PC-9 (cell line): ENCODE measurements at regions of chr1 and their contacts with region 1.

Region 1: GRCh38 chr1:55244476-55245099 is 29.4 kb upstream of the USP24 start:
- DNase-seq: peak; percentile 39 to 86
- H3K4me3 ChIP-seq: peak overlapping the region; percentile 23; the same call in 1 of the 2 replicates
- H3K27ac ChIP-seq: peak overlapping the region; percentile 96
- H3K4me1 ChIP-seq: peaks cover 57% of the 10 kb centered on the region
- H3K27me3 ChIP-seq: no peaks in the 10 kb centered on the region
- CTCF ChIP-seq: no peak

Region 2: GRCh38 chr1:54861070-54861761 is 383.4 kb before region 1 on chr1:
- CTCF ChIA-PET with region 1: no interaction called
- POLR2A ChIA-PET with region 1: no interaction called
- intact Hi-C with region 1: no loop called
- DNase-seq: peak; percentile 79 to 89
- H3K4me3 ChIP-seq: no peak overlapping the region
- H3K27ac ChIP-seq: peak overlapping the region; percentile 88
- H3K4me1 ChIP-seq: peaks cover 90% of the 10 kb centered on the region
- H3K27me3 ChIP-seq: no peaks in the 10 kb centered on the region
- CTCF ChIP-seq: no peak

Region 3: DNA sequence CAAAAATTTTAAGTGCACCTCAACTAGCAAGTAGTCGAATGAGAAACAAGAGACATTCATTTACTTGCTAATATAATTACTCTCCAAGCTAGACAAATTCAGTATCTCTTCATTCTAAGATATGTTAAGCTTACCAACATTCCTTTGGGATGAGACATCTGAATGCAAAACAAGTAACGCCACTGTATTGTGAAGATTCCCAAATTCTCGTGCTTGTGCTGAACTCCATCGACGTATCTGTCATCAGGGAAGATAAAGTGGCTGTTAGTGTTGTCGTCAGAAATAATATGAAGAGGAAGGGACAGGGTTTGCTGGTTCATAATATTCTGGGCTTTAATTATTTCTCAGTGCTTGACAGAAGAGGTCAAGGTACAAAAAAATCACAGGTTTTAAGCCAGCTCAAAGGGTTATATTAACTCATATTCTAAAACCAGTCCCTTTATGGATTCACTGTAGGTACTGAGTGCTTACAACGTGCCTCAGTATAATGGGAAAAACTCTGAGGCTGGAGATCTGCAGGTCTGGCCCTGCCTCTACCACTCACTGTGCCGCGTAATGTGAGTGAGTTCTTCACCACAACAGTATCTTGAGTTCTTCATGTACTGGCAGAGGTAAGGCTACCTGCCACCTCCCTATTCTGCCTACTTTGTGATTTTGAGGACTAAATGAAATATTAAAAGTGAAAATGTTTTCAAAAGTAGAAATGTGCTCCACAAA is 163.2 kb before region 1 on chr1:
- CTCF ChIA-PET with region 1: no interaction called
- POLR2A ChIA-PET with region 1: interaction called, 13 read pairs
- intact Hi-C with region 1: no loop called
- DNase-seq: peak in 1 of 2 experiments; percentile 40
- H3K4me3 ChIP-seq: no peak overlapping the region
- H3K27ac ChIP-seq: no peak overlapping the region
- H3K4me1 ChIP-seq: no peaks in the 10 kb centered on the region
- H3K27me3 ChIP-seq: no peaks in the 10 kb centered on the region
- CTCF ChIP-seq: no peak

Region 4: DNA sequence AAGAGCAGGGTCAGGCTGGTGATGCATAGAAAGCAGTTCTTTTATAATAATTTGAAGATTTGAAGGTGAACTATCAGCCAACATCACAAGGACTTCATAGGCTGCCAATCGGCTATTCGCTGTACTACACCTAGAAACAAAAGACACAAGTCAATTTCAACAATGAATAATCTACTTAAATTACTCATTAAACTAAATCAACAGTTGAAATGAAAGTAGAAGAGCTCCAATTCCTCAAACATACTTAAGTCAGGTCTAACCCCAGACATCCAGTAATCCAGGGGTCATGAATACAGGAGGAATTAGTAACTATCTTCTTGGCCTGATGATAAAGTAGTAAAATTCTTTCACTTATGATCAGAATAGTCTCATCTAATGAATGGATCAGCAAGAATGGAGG is 140.7 kb before region 1 on chr1:
- CTCF ChIA-PET with region 1: no interaction called
- POLR2A ChIA-PET with region 1: no interaction called
- intact Hi-C with region 1: no loop called
- DNase-seq: no peak
- H3K4me3 ChIP-seq: no peak overlapping the region
- H3K27ac ChIP-seq: no peak overlapping the region
- H3K4me1 ChIP-seq: no peaks in the 10 kb centered on the region
- H3K27me3 ChIP-seq: no peaks in the 10 kb centered on the region
- CTCF ChIP-seq: no peak

Region 5: DNA sequence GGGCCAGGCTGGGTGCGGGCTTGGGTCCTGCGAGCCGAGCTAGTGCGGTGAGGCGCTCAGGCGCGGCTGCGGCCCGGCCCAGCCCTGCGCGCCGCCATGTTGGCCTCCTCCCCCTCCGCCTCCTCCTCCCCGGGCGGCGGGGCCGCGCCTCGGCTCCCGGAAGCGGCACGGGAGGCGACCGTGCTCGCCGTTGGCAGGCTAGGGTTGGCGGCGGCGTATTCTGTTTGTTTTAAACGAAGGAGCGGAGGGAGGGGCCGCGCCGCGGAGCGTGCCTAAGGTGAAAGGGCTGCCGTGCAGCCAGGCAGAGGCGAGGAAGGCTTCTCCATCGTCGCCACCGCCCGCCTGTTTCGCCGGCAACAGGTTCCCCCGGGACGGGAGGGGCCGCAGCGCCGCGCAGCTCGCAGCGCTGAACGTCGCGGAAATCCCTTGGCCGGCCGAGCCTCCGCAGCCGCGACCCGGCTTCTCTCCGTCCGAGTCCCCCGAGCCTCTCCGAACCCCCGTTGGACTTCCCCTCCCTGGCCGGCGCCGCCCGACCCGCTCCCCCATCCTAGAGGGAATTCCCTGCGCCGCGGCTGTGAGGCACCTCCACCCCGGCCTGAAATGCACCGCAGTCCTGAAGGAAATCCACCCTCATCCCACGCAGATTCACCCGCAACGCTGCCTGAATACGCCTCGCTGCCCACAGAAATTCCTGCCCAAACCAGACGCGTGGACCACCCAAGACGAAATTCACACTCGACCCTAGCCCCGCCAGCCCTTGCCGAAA is 29.1 kb before region 1 on chr1 and contains the start of gene USP24:
- CTCF ChIA-PET with region 1: no interaction called
- POLR2A ChIA-PET with region 1: interaction called, 5 read pairs
- intact Hi-C with region 1: loop called (anchors 2 kb)
- DNase-seq: peak; percentile 71 to 87
- H3K4me3 ChIP-seq: peak within 1 kb of the TSS; percentile 92
- H3K27ac ChIP-seq: peak within 1 kb of the TSS; percentile 87
- H3K4me1 ChIP-seq: peaks cover 58% of the 10 kb centered on the region
- H3K27me3 ChIP-seq: no peaks in the 10 kb centered on the region
- CTCF ChIP-seq: no peak
- total RNA-seq, gene USP24: 56.3 and 61.0 TPM in 2 replicates

Region 6: DNA sequence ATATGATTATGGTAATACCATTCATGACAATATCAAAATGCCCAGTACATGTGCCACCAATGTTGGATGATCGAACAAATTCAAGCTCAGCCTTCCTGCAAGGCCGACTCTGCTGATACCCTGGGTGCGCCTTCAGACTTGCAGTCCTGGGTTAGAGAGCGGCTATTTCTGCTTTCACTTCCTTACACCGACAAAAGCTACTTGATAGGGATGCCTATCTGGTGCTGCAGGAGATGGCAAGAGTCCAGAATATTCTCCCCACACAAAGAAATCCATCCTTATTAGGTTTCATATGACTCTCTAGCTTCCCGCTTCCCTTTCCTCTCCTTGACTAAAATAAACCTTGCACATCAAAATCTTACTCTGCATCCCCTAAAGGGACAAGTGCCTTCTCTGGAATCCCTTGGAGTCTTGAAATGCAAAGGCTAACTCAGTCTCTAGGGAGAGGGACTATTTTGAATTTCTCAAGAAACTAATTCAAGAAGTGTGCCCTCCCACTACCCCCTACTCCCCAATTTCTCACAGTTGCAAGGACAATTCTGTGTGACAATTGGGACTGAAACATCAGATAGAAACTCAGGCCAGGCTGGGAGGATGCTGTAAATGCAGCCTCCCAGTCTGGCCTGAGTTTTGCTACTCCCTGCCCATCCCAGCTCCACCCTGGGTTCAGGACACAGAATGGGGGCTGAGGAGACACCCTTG is 73.7 kb after region 1 on chr1:
- CTCF ChIA-PET with region 1: no interaction called
- POLR2A ChIA-PET with region 1: no interaction called
- intact Hi-C with region 1: no loop called
- DNase-seq: no peak
- H3K4me3 ChIP-seq: no peak overlapping the region
- H3K27ac ChIP-seq: no peak overlapping the region
- H3K4me1 ChIP-seq: peaks cover 34% of the 10 kb centered on the region
- H3K27me3 ChIP-seq: no peaks in the 10 kb centered on the region
- CTCF ChIP-seq: no peak

Region 7: DNA sequence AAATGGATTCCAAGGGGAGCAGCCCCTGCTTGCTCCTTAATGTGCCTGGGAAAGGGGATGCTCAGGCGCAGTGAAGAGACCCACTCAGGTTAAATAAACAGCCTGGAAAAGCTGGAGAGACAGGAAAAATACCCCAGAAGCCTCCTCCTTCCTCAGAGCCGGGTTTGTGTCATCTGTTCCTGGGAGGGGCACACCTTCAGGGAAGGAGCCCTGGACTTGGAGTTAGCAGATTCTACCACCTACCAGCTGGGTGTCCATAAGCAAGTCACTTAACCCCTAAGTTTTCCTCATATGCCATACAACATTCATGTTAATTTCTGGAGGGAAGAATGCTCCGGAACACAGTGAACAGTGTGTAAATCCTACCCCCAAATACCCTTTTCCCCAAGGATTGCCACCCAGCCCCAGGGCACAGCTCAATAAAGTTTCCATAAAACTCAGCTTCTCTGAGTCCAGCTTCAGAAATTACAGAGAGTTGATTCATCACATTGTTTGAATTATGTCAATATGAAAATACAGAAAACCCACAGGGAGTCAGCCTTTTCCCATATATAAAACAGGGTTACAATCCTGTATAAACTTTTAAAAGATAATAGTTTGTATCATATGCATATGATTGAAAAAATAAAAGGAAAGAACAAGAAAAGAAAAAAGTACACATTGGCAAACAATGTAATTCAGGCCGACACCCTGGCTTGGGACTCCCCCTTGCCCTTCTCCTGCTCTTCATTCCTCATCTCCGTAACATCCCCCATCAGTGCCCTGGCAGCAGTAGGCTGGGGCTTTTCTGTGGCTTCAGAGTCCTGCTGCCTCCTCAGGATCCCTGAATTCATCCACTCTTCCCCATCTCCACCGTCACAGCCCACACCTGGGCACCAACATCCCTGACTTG is 262.3 kb after region 1 on chr1:
- CTCF ChIA-PET with region 1: no interaction called
- POLR2A ChIA-PET with region 1: no interaction called
- intact Hi-C with region 1: no loop called
- DNase-seq: peak; percentile 16 to 80
- H3K4me3 ChIP-seq: no peak overlapping the region
- H3K27ac ChIP-seq: peak overlapping the region; percentile 45
- H3K4me1 ChIP-seq: peaks cover 39% of the 10 kb centered on the region
- H3K27me3 ChIP-seq: no peaks in the 10 kb centered on the region
- CTCF ChIP-seq: no peak; the same call in 1 of the 2 replicates